Common myeloid progenitor, CD34-positive (primary cell): ENCODE measurements at regions of chr11 and their contacts with region 1.

Region 1: DNA sequence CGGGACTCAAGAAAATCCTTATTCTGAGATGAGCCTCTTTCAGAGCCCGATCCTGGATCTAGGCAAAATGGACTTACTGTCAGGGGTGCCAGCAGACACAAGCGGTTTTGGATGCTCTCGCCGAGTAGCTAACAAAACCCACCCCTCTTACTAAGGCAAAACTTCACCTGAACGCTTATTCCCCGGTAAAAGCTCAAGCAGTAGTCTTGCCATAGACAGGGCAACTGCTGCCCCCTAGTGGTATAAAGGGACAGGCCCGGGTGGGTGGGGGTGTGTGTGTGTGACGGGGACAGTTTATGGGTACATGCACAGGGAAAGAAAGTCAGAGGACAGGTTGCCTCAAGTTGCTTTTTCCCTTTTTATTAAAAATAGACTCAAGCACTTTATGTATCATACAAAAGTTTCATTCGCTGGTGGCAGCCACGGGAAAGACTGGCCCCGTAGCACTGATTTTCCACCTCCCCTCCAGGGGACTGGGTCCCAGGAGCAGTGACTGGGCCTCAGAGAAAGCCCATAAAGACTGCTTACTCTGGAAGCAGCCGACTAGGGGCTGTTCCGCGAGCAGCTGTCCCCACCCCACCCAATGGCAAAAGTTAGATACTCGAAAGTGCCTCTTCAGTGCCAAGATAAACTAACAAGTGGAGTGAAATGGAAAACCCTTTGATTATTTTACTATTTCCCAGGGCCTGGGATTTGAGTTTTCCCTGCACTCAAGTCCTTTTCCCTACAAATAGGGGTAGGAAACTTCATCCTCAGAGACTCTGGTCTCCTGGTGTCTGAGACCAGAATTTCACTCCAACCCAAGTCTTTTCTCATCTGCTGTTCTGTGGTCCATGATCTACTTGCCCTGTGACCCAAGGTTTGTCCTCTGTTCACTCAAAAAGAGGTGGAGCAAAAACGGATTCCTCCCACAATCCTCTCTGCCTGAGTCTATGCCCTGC is 4.7 kb downstream of the YPEL4 start:
- DNase-seq: peak; percentile 82 to 88 (median 87)
- H3K4me3 ChIP-seq: no peak overlapping the region
- H3K27ac ChIP-seq: no peak overlapping the region
- H3K4me1 ChIP-seq: peaks cover 21 to 93% (median 66%) of the 10 kb centered on the region in 4 experiments
- H3K27me3 ChIP-seq: peaks cover 0 to 41% (median 19%) of the 10 kb centered on the region in 5 experiments

Region 2: GRCh38 chr11:57480409-57481137 is 164.4 kb before region 1 on chr11:
- CTCF ChIA-PET with region 1: interaction called, 12 read pairs
- POLR2A ChIA-PET with region 1: no interaction called
- DNase-seq: peak in 2 of 3 donors; percentile 72 to 73
- H3K4me3 ChIP-seq: no peak overlapping the region
- H3K27ac ChIP-seq: no peak overlapping the region
- H3K4me1 ChIP-seq: peaks cover 18 to 62% (median 55%) of the 10 kb centered on the region in 4 experiments
- H3K27me3 ChIP-seq: peaks cover 0 to 4% (median 0%) of the 10 kb centered on the region in 5 experiments

Region 3: GRCh38 chr11:57530596-57531507 is 114.2 kb before region 1 on chr11 and contains the start of gene TIMM10:
- CTCF ChIA-PET with region 1: interaction called, 115 read pairs
- POLR2A ChIA-PET with region 1: interaction called, 3 read pairs
- DNase-seq: peak; percentile 97 to 98 (median 98)
- H3K4me3 ChIP-seq: peak within 1 kb of the TSS; percentile 62 to 96 (median 85)
- H3K27ac ChIP-seq: peak within 1 kb of the TSS; percentile 67 to 88
- H3K4me1 ChIP-seq: peaks cover 7 to 32% (median 19%) of the 10 kb centered on the region in 4 experiments
- H3K27me3 ChIP-seq: no peaks in the 10 kb centered on the region

Region 4: DNA sequence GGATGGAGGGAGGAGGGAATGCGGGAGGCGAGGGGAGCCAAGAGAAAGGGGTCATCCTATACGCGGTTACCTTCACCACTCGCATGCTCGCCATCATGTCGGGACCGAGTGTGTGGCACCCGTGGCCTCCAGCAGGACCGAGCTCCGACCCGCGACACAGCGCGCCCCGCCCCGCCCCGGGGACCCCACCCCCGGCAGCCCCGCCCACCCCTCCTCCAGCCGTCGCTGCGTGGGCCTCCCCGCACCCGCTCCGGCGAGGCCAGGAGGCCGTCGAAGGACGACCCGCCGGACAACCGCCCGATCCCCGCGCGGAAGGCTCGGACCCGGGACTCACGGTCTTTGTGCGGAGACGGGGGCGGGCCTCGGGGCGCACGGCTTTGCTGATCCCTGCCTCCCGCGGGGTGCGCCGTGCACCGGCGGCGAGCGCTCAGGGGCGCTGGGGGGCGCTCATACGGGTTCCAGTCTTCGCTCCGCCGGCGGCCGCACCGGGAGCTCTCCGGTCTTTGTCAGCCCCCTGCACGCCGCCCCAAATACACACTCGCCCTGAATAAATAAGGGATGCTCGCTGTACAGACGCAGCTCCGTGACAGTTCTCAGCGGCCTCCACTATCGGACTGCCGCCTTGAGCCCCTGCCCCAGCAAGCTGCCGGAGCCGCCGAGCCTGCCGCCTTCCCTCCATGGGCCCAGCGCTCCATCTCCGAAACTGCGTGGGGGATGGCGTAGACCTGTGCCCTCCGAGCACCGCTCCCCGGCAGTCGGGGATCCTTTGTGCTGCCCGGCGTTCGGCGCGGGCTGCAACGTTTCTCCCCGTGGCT is 77.3 kb before region 1 on chr11 and contains the start of gene UBE2L6:
- CTCF ChIA-PET with region 1: interaction called, 401 read pairs
- POLR2A ChIA-PET with region 1: interaction called, 18 read pairs
- DNase-seq: peak; percentile 54 to 85 (median 66)
- H3K4me3 ChIP-seq: peak within 1 kb of the TSS; percentile 76 to 97 (median 94)
- H3K27ac ChIP-seq: peak within 1 kb of the TSS; percentile 46 to 76
- H3K4me1 ChIP-seq: peaks cover 13 to 62% (median 34%) of the 10 kb centered on the region in 4 experiments
- H3K27me3 ChIP-seq: no peaks in the 10 kb centered on the region

Region 5: GRCh38 chr11:57619331-57619730 is 25.7 kb before region 1 on chr11:
- CTCF ChIA-PET with region 1: interaction called, 158 read pairs
- POLR2A ChIA-PET with region 1: interaction called, 6 read pairs
- DNase-seq: peak in 2 of 3 donors; percentile 51 to 57
- H3K4me3 ChIP-seq: no peak overlapping the region
- H3K27ac ChIP-seq: no peak overlapping the region
- H3K4me1 ChIP-seq: peaks cover 0 to 3% (median 0%) of the 10 kb centered on the region in 4 experiments
- H3K27me3 ChIP-seq: no peaks in the 10 kb centered on the region

Region 6: GRCh38 chr11:57667736-57668435 is 22.9 kb after region 1 on chr11 and contains the start of gene ZDHHC5:
- CTCF ChIA-PET with region 1: interaction called, 10 read pairs
- POLR2A ChIA-PET with region 1: interaction called, 3 read pairs
- DNase-seq: peak; percentile 100
- H3K4me3 ChIP-seq: peak within 1 kb of the TSS; percentile 84 to 99 (median 97)
- H3K27ac ChIP-seq: peak within 1 kb of the TSS; percentile 100
- H3K4me1 ChIP-seq: peaks cover 10 to 27% (median 20%) of the 10 kb centered on the region in 4 experiments
- H3K27me3 ChIP-seq: no peaks in the 10 kb centered on the region